GM13976 (cell line): ENCODE measurements at regions of chr6 and their contacts with region 1.

Region 1: GRCh38 chr6:83215131-83216047 is 22.2 kb downstream of the RWDD2A start:
- DNase-seq: peak; percentile 40
- CTCF ChIP-seq: peak; percentile 81

Region 2: DNA sequence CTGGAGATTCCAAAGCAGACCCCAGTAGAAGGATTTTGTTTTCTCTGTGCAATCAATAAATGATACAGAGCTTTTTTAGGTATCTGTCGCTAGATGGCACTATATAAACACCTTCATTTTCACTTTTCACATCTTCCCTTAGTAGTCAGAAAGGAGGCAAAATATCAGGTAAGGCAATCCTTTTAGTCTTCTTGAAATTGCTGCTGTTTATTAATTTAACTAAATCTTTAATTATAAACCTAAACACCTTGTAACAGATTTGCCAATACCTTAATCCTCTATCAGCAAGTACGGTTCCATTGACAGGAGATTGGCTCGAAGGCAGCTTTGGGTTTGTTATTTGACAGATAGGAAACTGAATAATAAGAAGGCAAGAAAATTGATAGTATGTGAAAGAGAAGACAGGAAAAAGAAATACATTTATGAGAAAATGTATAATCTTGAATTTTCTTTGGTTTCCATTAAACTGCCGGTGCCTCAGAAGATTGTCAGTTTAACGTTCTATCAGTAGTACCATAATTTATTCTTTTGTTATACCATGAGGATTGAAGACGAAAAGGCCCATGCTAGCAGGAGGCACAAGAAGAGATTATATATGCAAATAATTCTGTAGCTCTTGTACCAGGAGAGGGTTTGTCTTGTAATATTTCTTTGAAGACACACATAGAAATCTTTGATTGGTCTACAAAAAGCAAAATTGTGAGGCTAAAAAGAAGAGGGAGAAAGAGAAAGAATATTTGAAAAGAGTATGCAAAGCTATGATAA is 944.3 kb before region 1 on chr6:
- in situ Hi-C with region 1: loop called (anchors 25 kb)
- DNase-seq: peak; percentile 50
- CTCF ChIP-seq: peak; percentile 44

Region 3: DNA sequence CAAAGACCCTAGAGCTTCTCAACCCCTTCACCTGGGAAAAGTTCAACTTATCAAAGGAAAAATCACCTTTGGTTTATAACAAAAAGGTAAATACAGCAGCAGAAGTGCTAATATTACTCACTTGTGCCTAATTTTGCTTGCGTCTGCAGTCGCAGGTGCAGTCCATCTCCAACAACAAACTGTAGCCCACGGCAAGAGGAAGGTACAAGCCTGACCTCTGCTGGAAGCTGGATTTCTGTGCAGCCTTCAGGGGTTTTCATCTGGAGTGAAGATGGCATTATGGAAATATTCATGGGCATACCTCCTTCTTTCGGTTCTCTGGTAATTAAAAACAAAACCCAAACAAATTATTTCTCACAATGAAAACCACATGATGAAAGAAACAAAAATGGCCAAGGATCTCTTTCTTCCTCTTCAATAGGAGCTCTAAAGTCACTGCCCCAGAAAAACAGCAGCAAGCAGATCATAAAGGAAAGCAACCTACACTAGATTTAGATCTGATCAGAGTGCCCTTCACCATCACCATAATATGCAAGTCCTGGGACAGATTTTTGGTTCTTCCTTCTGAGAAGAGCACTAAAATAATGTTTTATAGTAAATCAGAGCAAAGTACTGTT is 157.6 kb before region 1 on chr6:
- in situ Hi-C with region 1: no loop called
- DNase-seq: peak; percentile 34
- CTCF ChIP-seq: peak; percentile 72

Region 4: GRCh38 chr6:83071023-83071422 is 144.4 kb before region 1 on chr6:
- in situ Hi-C with region 1: no loop called
- DNase-seq: no peak
- CTCF ChIP-seq: no peak

Region 5: GRCh38 chr6:83509441-83509840 is 294.1 kb after region 1 on chr6:
- in situ Hi-C with region 1: no loop called
- DNase-seq: no peak
- CTCF ChIP-seq: no peak